K562 (cell line): ENCODE measurements at regions of chr9 and their contacts with region 1.

Region 1: DNA sequence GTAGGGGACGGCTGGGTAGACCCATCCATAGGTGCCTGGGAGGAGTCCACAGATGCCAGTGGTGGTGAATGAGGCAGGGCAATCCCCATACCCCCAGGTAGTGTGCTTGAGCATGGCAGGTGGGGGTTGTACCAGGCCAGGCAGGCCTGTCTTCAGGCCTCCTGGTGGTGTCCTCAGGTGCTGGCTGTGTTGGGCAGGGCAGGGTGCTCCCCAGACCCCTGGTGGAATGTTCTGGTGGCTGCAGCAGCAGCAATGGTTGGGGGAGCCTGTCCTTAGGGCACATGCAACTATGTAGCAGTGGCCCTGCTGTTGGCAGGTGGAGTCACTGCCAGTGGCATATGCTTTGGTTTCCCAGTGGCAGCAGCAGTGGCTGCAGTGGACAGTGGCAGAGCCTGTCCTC is 10.0 kb downstream of the ALG2 start:
- DNase-seq: no peak
- ATAC-seq: peak; percentile 86
- H3K4me3 ChIP-seq: no peak overlapping the region
- H3K27ac ChIP-seq: no peak overlapping the region
- H3K4me1 ChIP-seq: no peaks in the 10 kb centered on the region
- H3K27me3 ChIP-seq: peaks cover 2 to 3% of the 10 kb centered on the region in 2 experiments; a peak in 2 of 5 replicates
- CTCF ChIP-seq: peak in 2 of 3 experiments; percentile 14 to 83; a peak in 3 of 6 replicates
- EP300 ChIP-seq: no peak
- POLR2A ChIP-seq: no peak
- RAD21 ChIP-seq: no peak

Region 2: GRCh38 chr9:99173570-99174504 is 37.9 kb before region 1 on chr9:
- CTCF ChIA-PET with region 1: no interaction called
- POLR2A ChIA-PET with region 1: no interaction called
- in situ Hi-C with region 1: no loop called
- intact Hi-C with region 1: loop called (anchors 5 kb)
- DNase-seq: no peak
- ATAC-seq: no peak
- H3K4me3 ChIP-seq: no peak overlapping the region
- H3K27ac ChIP-seq: no peak overlapping the region
- H3K4me1 ChIP-seq: no peaks in the 10 kb centered on the region; a peak in 1 of 5 replicates
- H3K27me3 ChIP-seq: peaks cover 0 to 22% of the 10 kb centered on the region in 2 experiments
- CTCF ChIP-seq: no peak
- EP300 ChIP-seq: no peak
- POLR2A ChIP-seq: no peak
- RAD21 ChIP-seq: no peak

Region 3: GRCh38 chr9:99221621-99222415 is 10.1 kb after region 1 on chr9 and contains the starts of genes ALG2 and SEC61B:
- CTCF ChIA-PET with region 1: no interaction called
- POLR2A ChIA-PET with region 1: interaction called, 25 read pairs
- in situ Hi-C with region 1: no loop called
- intact Hi-C with region 1: no loop called
- DNase-seq: peak; percentile 95 to 98 (median 98)
- ATAC-seq: peak; percentile 95
- H3K4me3 ChIP-seq: peak within 1 kb of the TSS; percentile 64
- H3K27ac ChIP-seq: peak within 1 kb of the TSS; percentile 98
- H3K4me1 ChIP-seq: peaks cover 9 to 14% of the 10 kb centered on the region in 2 experiments; a peak in 3 of 5 replicates
- H3K27me3 ChIP-seq: no peaks in the 10 kb centered on the region
- CTCF ChIP-seq: no peak
- EP300 ChIP-seq: peak; percentile 20; the same call in 1 of the 2 replicates
- POLR2A ChIP-seq: peak; percentile 92
- RAD21 ChIP-seq: no peak
- polyA plus RNA-seq, gene ALG2: 4.9 to 7.3 TPM
- polyA plus RNA-seq, gene SEC61B: 57.8 to 107 TPM

Region 4: DNA sequence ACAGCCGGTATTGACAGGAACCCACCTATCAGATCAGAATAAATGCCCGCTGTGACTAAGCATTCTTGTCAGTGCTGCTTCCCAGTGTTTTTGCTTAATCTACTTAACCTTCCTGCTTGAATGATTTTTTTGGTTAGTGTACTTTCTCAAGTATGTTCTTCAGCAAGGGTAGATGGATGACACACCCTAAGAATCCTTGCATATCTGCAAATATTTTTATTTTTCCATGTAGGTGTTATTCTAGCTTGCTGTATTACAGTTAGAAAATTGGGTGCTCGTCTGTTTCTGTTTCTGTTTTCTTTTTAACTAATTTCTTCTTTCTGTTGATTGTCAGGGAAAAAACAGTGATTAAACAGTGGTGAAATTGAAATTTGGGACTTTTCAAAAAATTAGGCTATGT is 74.8 kb after region 1 on chr9:
- CTCF ChIA-PET with region 1: no interaction called
- POLR2A ChIA-PET with region 1: no interaction called
- in situ Hi-C with region 1: no loop called
- intact Hi-C with region 1: no loop called
- DNase-seq: no peak
- ATAC-seq: no peak
- H3K4me3 ChIP-seq: no peak overlapping the region
- H3K27ac ChIP-seq: no peak overlapping the region
- H3K4me1 ChIP-seq: no peaks in the 10 kb centered on the region
- H3K27me3 ChIP-seq: peaks cover 12 to 16% of the 10 kb centered on the region in 2 experiments; a peak in 3 of 5 replicates
- CTCF ChIP-seq: no peak
- EP300 ChIP-seq: no peak
- POLR2A ChIP-seq: no peak
- RAD21 ChIP-seq: no peak